RWPE1 (cell line): ENCODE measurements at regions of chr1 and their contacts with region 1.

Region 1: GRCh38 chr1:155167166-155168104 is 5.7 kb downstream of the KRTCAP2 start:
- DNase-seq: peak; percentile 72
- H3K27ac ChIP-seq: peak overlapping the region; percentile 59
- CTCF ChIP-seq: peak; percentile 80

Region 2: GRCh38 chr1:155127105-155127964 is 40.1 kb before region 1 on chr1 and contains the start of gene EFNA1:
- CTCF ChIA-PET with region 1: interaction called, 14 read pairs
- POLR2A ChIA-PET with region 1: no interaction called
- DNase-seq: no peak
- H3K27ac ChIP-seq: peak within 1 kb of the TSS; percentile 98
- CTCF ChIP-seq: no peak